Cardiac septum (tissue), 1 donor: ENCODE measurements at regions of chr1 and their contacts with region 1.

Region 1: DNA sequence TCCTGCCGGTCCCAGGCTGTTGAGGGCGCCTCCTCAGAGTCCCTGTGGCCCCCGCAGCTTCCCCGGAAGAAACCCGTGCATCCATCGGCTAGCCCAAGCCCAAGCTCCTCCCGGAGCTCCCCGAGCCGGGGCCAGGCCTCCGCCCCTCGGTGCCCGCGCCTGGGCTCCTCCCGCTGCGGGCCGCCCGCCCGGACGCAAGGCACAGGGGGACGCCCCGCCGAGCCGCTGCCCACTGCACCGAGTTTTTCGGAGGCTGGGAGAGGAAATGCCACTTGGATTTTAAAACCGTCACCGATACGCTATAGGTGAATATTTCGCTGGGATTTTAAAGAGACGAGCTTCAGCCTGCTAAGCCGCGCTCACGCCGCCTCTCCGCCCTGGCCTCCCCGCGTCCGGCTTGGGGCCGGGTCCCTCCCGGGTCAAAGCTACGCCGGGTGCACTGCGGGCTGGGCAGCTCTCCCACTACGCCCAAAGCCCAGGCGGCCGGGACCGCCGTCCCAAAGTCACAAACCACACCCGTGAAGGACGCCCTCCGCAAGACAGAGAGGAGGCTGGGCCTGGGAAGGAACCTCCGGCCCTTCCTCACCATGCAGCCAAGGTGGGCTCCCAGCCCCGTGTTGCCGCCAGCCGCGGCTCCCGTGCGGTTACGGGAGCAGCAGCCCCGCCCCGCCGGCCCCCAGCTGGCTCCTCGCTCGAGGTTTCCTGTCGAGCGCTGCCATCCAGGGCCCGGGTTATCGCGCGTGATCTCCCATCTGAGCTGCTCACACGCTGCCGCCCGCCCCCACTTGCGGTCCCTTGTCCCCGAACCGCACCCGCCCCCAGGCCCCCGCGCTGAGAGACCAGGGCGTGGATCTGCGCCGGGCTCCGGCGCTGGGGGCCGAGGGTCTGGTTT is 63.2 kb downstream of the CD247 start:
- DNase-seq: peak; percentile 81

Region 2: DNA sequence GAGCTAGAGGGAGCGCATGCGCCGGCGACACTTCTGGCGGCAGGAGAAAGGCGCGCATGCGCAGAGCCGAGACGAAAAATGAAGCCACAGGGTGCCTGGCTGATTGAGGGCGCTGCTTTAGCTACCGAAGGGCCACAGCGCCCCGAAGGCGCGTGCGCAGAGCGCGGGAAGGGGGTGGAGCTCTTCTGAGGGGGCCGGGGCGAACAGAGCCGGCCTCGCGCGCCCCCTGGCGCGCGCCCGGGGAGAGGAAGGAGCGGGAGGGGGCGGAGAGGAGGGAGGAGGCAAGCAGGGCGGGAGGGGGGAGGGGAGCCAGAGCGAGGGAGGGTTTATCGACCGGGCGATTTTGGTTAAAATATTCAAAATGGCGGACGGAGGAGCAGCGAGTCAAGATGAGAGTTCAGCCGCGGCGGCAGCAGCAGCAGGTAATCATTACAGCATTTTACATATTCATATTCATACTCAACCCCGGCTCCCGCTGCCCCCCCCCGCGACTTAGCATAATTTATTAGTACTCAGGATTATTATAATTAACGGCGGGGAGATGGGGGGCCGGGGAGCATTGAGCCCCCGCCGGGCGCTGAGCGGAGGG is 234.5 kb before region 1 on chr1 and contains the start of gene POU2F1:
- intact Hi-C with region 1: loop called (anchors 2 kb)
- DNase-seq: peak; percentile 100
- total RNA-seq, gene POU2F1: 9.9 TPM

Region 3: DNA sequence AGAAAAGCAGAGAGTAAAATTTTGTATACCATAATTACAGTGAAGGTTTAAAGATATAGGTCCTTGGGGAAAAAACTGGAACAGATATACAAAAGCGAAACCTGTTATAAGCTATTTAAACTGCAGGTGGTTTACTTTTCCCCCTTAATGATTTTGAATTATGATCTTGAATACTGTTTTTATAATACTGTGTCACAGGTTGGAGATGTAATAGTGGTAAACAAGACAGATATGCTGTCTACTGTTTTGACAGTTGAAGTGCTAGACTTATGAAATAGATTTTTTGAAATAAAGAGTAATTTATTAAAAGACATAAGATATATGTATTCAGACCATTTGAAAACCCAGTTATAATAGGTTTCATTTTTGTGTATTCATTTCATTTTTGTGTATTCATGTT is 66.2 kb before region 1 on chr1:
- intact Hi-C with region 1: no loop called
- DNase-seq: no peak

Region 4: GRCh38 chr1:167420510-167420909 is 34.6 kb before region 1 on chr1:
- intact Hi-C with region 1: no loop called
- DNase-seq: no peak